Activated CD8-positive, alpha-beta T cell treated with anti-CD3 and anti-CD28 coated beads, Interleukin-2, amount 10 ng/mL, durations not matched to agents 7 days and 5 days (primary cell): ENCODE measurements at regions of chr13 and their contacts with region 1.

Region 1: DNA sequence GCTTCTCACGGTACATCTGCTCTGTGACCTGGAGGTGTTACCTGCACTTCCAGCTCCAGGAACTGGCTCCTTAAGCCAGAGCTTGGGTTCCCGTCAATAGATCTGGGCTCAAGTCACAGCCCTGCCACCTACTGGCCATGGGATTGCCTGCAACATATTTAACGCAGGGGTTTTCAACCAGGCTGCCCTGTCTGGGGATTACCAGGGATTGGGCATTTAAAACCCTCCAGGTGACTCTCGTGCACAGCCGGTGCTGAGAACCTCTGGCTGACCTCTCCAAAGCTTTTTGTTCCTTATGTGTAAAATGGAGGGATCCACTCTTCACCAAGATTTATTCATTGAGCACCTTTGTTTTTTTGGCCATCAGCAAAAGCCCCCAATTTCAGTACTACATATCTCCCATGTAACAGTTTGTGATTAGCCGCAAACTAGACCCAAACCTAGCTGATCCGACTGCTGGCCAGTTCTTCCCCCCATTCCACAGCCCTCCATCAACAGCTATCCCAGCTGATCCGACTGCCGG is 76.6 kb upstream of the STK24 start:
- DNase-seq: peak; percentile 77
- ATAC-seq: peak; percentile 89
- H3K4me3 Mint-ChIP-seq: no peak overlapping the region
- H3K27ac Mint-ChIP-seq: no peak overlapping the region
- H3K4me1 Mint-ChIP-seq: peaks cover 2% of the 10 kb centered on the region
- H3K27me3 Mint-ChIP-seq: peaks cover 5% of the 10 kb centered on the region

Region 2: GRCh38 chr13:98445340-98446233 is 207.9 kb before region 1 on chr13:
- CTCF ChIA-PET with region 1: interaction called, 102 read pairs
- POLR2A ChIA-PET with region 1: no interaction called
- DNase-seq: peak; percentile 86
- ATAC-seq: peak; percentile 93
- H3K4me3 Mint-ChIP-seq: peak overlapping the region; percentile 34
- H3K27ac Mint-ChIP-seq: peak overlapping the region; percentile 87
- H3K4me1 Mint-ChIP-seq: peaks cover 19% of the 10 kb centered on the region
- H3K27me3 Mint-ChIP-seq: no peaks in the 10 kb centered on the region

Region 3: GRCh38 chr13:98451676-98452470 is 201.7 kb before region 1 on chr13:
- CTCF ChIA-PET with region 1: interaction called, 102 read pairs
- POLR2A ChIA-PET with region 1: no interaction called
- DNase-seq: no peak
- ATAC-seq: no peak
- H3K4me3 Mint-ChIP-seq: no peak overlapping the region
- H3K27ac Mint-ChIP-seq: no peak overlapping the region
- H3K4me1 Mint-ChIP-seq: peaks cover 22% of the 10 kb centered on the region
- H3K27me3 Mint-ChIP-seq: no peaks in the 10 kb centered on the region

Region 4: GRCh38 chr13:98466634-98467236 is 186.8 kb before region 1 on chr13:
- CTCF ChIA-PET with region 1: interaction called, 13 read pairs
- POLR2A ChIA-PET with region 1: no interaction called
- DNase-seq: peak; percentile 48
- ATAC-seq: peak; percentile 72
- H3K4me3 Mint-ChIP-seq: no peak overlapping the region
- H3K27ac Mint-ChIP-seq: peak overlapping the region; percentile 59
- H3K4me1 Mint-ChIP-seq: peaks cover 16% of the 10 kb centered on the region
- H3K27me3 Mint-ChIP-seq: no peaks in the 10 kb centered on the region

Region 5: GRCh38 chr13:98484289-98485219 is 169.0 kb before region 1 on chr13:
- CTCF ChIA-PET with region 1: interaction called, 13 read pairs
- POLR2A ChIA-PET with region 1: no interaction called
- DNase-seq: peak; percentile 49
- ATAC-seq: peak; percentile 46
- H3K4me3 Mint-ChIP-seq: no peak overlapping the region
- H3K27ac Mint-ChIP-seq: peak overlapping the region; percentile 23
- H3K4me1 Mint-ChIP-seq: peaks cover 70% of the 10 kb centered on the region
- H3K27me3 Mint-ChIP-seq: no peaks in the 10 kb centered on the region

Region 6: DNA sequence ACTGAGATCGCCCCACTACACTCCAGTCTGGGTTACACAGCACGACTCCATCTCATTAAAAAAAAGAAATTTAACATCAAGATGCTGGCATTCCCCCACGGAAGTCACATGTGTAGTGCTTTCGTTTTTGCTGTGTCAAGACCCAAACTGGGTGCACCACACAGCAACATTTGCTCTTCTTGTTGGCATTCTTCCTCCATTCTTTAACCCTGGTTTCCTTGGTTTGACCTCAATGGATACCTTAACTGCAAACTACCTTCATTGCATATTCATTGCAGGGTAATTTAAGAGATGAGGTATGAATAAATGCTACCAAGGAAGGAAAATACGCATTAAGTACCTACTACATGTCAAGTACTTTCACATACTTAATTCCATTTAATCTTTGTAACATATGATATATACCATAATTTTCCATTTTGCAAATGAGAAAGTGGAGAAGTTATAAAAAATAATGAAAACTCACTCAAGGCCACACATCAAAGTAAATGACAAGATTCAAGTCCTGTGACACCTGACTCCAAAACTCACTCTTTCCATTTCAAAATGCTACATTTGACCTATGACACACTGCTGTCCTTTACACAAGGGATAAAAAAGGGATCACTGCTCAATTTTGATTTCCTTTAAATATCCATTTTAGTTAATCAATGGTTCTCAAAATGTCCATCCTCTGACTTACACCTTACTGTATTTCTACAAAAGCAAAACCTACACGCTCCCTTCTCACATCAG is 135.8 kb before region 1 on chr13:
- CTCF ChIA-PET with region 1: interaction called, 10 read pairs
- POLR2A ChIA-PET with region 1: no interaction called
- DNase-seq: peak; percentile 37
- ATAC-seq: peak; percentile 55
- H3K4me3 Mint-ChIP-seq: no peak overlapping the region
- H3K27ac Mint-ChIP-seq: no peak overlapping the region
- H3K4me1 Mint-ChIP-seq: peaks cover 69% of the 10 kb centered on the region
- H3K27me3 Mint-ChIP-seq: no peaks in the 10 kb centered on the region

Region 7: GRCh38 chr13:98632961-98633360 is 20.6 kb before region 1 on chr13:
- CTCF ChIA-PET with region 1: interaction called, 24 read pairs
- POLR2A ChIA-PET with region 1: no interaction called
- DNase-seq: no peak
- ATAC-seq: no peak
- H3K4me3 Mint-ChIP-seq: no peak overlapping the region
- H3K27ac Mint-ChIP-seq: no peak overlapping the region
- H3K4me1 Mint-ChIP-seq: no peaks in the 10 kb centered on the region
- H3K27me3 Mint-ChIP-seq: peaks cover 7% of the 10 kb centered on the region